ENCODE measurements at regions of chr2 and their contacts with region 1.

Region 1: DNA sequence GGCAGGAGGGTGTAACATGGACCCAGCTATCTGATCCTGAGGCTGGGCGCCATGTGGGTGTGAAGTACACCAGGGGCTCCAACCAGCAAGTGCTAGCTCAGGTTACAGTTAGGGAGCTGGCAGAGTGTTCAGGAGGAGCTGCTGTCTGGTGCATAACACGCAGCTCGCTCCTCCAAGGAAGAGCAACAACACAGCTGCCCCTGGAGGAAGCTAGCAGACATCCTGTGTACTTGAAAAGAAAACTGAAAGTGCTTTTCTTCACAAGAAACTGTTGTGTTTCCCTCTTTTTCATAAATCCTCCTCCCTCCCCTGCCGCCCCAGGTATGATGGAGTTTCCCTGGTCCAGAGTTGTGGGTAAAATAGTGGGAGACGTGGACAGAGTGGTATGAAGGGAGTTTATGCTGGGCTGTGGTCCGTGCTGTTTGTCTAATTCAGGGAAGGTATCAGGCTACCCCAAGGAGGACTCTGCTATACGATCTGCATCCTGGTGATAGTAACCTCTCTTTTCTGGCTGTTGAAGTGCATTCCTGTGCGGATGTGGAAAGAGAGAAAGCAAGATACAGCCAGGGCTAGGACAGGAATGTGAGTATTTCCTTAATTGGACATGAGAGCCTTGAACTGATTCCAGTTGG is 6.1 kb upstream of the LBH start:
- DNase-seq: peak; percentile 48
- H3K4me3 Mint-ChIP-seq: peak overlapping the region; percentile 81
- H3K27ac Mint-ChIP-seq: peak overlapping the region; percentile 96
- H3K4me1 Mint-ChIP-seq: peaks cover 46% of the 10 kb centered on the region
- H3K27me3 Mint-ChIP-seq: peaks cover 2% of the 10 kb centered on the region

Region 2: DNA sequence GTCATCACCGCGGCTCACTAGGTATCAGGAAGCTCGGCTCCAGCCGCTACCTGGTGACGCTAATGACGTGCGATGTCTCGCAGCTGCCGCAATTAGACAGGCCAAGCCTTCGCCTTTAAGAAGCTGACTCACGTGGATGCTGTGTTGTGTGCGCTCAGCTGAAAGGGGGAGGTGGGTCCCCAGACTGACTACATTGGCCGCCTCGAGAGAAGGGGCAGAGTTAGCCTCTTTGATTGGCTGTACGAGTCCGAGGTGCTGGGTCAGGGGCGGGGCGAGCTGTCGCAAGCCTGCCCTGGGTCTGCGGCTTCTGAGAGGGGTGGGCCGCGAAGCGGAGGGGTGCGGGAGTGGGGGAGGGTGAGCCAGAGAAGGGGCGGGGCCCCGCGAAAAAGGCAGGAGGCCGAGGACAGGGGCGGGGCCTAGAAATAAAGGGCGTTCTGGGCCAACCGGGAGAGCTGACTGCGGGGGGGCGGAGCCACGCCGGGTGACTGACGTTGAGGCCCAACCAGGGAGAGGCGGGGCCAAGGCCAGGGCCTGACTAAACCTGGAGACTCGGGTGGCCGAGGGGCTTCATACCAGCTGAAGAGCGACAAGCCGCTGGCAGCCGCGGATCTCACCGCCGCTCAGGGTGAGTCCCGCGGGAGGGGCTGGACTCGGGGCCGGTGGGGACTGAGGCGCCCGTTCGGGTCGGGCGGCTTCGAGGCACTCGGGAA is 78.7 kb before region 1 on chr2 and contains the start of gene YPEL5:
- intact Hi-C with region 1: loop called (anchors 2 kb)
- DNase-seq: peak; percentile 99
- H3K4me3 Mint-ChIP-seq: peak within 1 kb of the TSS; percentile 77
- H3K27ac Mint-ChIP-seq: peak within 1 kb of the TSS; percentile 92
- H3K4me1 Mint-ChIP-seq: peaks cover 34% of the 10 kb centered on the region
- H3K27me3 Mint-ChIP-seq: no peaks in the 10 kb centered on the region
- total RNA-seq, gene YPEL5: 24.1 and 27.8 TPM in 2 replicates

Region 3: DNA sequence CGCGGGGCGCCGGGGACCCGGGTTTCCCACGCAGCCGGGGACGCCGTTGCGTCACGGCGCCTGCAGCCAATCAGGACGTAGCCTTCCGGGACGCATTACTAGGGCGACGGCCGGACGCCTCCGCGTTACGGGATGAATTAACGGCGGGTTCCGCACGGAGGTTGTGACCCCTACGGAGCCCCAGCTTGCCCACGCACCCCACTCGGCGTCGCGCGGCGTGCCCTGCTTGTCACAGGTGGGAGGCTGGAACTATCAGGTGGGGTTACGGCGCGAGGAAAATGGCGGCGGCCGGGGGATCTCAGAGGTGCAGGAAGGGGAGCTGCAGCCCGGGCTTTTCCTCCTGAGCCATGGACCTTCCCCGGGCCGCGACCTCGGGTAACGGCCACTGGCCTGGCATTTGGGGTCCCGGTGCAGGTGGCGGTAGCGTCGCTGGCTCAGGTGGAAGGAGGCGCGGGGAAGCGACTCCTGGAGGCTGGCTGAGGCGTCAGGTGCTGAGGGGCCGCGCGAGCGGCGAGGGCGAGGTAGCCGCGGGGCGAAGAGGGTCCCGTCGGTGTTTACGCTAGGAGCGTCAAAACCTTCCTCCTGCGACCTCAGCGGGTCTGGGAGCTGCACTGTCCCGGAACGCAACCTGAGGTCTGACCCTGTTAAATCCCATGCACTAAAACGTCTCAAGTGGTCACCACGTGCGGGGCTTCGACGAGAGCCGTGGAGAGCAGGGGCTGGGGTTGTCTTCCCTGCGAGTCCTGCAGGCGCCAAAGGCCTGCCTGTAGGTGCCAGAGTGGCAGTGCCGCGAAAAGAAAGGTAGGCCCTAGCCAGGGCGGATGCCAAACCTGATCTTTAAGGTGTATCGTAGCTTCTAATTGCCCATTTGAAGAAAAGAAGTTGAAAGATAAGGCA is 222.2 kb after region 1 on chr2 and contains the start of gene LCLAT1:
- intact Hi-C with region 1: loop called (anchors 1 kb)
- DNase-seq: peak; percentile 81
- H3K4me3 Mint-ChIP-seq: peak within 1 kb of the TSS; percentile 94
- H3K27ac Mint-ChIP-seq: peak within 1 kb of the TSS; percentile 97
- H3K4me1 Mint-ChIP-seq: peaks cover 21% of the 10 kb centered on the region
- H3K27me3 Mint-ChIP-seq: no peaks in the 10 kb centered on the region
- total RNA-seq, gene LCLAT1: 24.6 and 28.9 TPM in 2 replicates

Measured in activated T-helper 2 cell treated with anti-CD3 and anti-CD28 coated beads, Interferon-gamma antibody, Interleukin-2, Interleukin-4, amounts not matched to agents 10 μg/mL and 5 μg/mL and 100 μg/mL, durations not matched to agents 14 hours and 24 hours and 36 hours (primary cell).